Activated naive CD4-positive, alpha-beta T cell treated with anti-CD3 and anti-CD28 coated beads for 36 hours (primary cell): ENCODE measurements at regions of chr5 and their contacts with region 1.

Region 1: DNA sequence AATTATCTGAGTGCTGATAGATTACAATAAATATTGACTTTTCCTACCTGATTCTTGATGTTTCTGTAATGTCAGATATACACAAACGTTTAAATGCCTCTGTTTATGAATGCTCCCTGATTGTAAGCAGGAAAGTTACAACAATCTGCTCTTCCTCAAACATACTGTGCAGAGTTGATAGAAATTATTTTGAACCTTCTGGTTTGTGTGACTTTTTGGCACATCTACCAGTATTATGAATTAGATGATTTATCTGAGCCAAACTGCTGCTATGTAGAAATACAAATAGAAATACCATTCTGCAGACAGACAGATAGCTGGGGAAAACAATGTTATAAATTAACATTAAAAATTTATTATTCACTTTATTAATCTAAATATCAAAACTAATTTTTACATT is 113.0 kb downstream of the SLF1 start:
- DNase-seq: no peak
- H3K4me3 Mint-ChIP-seq: no peak overlapping the region
- H3K27ac Mint-ChIP-seq: no peak overlapping the region
- H3K4me1 Mint-ChIP-seq: no peaks in the 10 kb centered on the region
- H3K27me3 Mint-ChIP-seq: no peaks in the 10 kb centered on the region

Region 2: DNA sequence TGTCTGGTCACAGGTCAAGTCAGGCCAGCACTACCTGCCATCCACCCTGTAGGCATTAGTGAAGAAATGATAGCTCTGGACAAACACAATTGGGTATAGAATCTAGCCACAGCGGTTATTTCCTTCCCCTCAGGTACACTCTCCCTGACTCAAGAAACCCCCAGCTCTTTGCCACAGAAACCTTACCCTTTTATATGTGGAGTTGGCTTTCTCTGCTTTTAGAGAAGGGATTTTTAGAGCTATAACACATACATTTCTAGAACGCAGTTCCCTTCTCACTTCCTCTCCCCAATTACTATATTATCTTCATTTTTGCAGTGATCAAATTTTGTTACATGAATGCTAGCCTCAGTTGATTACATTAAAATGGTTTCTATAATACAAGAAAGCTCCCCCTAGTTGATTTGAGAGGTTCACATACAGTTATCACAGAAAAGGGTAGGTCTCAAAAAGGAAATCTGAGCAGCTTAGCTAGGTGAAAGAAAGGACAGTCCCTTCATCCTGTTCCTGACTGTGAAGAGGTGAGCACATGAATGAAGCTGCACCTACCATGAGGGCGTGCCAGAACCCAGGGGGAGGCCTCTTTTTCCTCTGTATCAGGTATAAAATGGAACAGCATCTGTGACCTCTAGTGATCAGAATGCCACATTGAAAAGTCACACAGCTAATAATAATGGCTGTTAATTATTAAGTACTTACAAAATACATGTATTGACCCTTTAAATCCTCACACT is 538.6 kb before region 1 on chr5:
- CTCF ChIA-PET with region 1: no interaction called
- intact Hi-C with region 1: loop called (anchors 10 kb)
- DNase-seq: no peak
- H3K4me3 Mint-ChIP-seq: no peak overlapping the region
- H3K27ac Mint-ChIP-seq: no peak overlapping the region
- H3K4me1 Mint-ChIP-seq: no peaks in the 10 kb centered on the region
- H3K27me3 Mint-ChIP-seq: peaks cover 3% of the 10 kb centered on the region

Region 3: DNA sequence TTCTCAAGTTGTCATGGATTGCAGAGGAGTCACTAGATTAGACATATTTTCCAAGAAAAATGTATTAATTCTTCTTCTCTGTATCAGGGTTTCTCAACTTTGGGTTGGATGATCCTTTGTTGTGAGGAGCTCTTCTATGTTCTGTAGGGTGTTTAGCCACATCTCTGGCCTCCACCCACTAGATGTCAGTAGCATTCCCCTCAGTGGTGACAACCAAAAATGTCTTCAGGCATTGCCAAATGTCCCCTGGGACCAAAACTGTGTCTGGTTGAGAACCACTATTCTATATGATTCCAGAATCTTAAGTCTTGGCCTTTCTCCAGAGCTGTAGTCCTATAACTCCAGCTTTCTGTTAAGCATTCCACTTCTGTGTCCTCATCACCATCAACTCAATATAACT is 334.0 kb before region 1 on chr5:
- CTCF ChIA-PET with region 1: no interaction called
- intact Hi-C with region 1: loop called (anchors 10 kb)
- DNase-seq: no peak
- H3K4me3 Mint-ChIP-seq: no peak overlapping the region
- H3K27ac Mint-ChIP-seq: no peak overlapping the region
- H3K4me1 Mint-ChIP-seq: no peaks in the 10 kb centered on the region
- H3K27me3 Mint-ChIP-seq: no peaks in the 10 kb centered on the region

Region 4: GRCh38 chr5:94693043-94693822 is 38.2 kb before region 1 on chr5:
- CTCF ChIA-PET with region 1: no interaction called
- intact Hi-C with region 1: no loop called
- DNase-seq: no peak
- H3K4me3 Mint-ChIP-seq: no peak overlapping the region
- H3K27ac Mint-ChIP-seq: no peak overlapping the region
- H3K4me1 Mint-ChIP-seq: no peaks in the 10 kb centered on the region
- H3K27me3 Mint-ChIP-seq: no peaks in the 10 kb centered on the region